ENCODE measurements at regions of chr18 and their contacts with region 1.

Region 1: GRCh38 chr18:7663366-7664312 is 96.5 kb downstream of the PTPRM start:
- DNase-seq: no peak
- H3K4me3 ChIP-seq: no peak overlapping the region
- H3K27ac ChIP-seq: peak overlapping the region; percentile 27 to 58
- H3K4me1 ChIP-seq: no peaks in the 10 kb centered on the region
- H3K27me3 ChIP-seq: no peaks in the 10 kb centered on the region
- CTCF ChIP-seq: no peak
- POLR2A ChIP-seq: no peak

Region 2: DNA sequence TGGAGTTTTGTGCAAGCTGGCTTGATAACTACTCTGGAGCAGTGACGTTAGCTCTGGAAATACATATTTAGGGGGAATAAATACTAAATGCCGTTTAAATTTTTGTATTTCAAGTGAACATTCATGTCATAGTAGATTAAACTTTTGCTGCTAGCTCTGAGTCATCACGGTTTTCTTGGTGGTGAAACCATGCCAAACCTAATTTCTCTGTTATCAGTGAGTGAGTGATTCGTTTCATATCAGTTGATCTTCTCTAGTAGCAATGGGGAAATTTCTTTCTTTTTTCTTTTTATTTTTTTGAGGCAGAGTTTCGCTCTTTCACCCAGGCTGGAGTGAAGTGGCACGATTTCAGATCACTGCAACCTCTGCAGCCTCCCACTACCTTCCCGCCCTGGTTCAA is 114.5 kb after region 1 on chr18:
- intact Hi-C with region 1: loop called (anchors 5 kb)
- DNase-seq: no peak
- H3K4me3 ChIP-seq: no peak overlapping the region
- H3K27ac ChIP-seq: no peak overlapping the region
- H3K4me1 ChIP-seq: no peaks in the 10 kb centered on the region
- H3K27me3 ChIP-seq: no peaks in the 10 kb centered on the region
- CTCF ChIP-seq: no peak
- POLR2A ChIP-seq: no peak

Region 3: GRCh38 chr18:7950380-7951143 is 286.9 kb after region 1 on chr18:
- intact Hi-C with region 1: no loop called
- DNase-seq: no peak
- H3K4me3 ChIP-seq: no peak overlapping the region
- H3K27ac ChIP-seq: no peak overlapping the region
- H3K4me1 ChIP-seq: no peaks in the 10 kb centered on the region
- H3K27me3 ChIP-seq: no peaks in the 10 kb centered on the region
- CTCF ChIP-seq: no peak
- POLR2A ChIP-seq: no peak